HEK293T (cell line): ENCODE measurements at regions of chr12 and their contacts with region 1.

Region 1: DNA sequence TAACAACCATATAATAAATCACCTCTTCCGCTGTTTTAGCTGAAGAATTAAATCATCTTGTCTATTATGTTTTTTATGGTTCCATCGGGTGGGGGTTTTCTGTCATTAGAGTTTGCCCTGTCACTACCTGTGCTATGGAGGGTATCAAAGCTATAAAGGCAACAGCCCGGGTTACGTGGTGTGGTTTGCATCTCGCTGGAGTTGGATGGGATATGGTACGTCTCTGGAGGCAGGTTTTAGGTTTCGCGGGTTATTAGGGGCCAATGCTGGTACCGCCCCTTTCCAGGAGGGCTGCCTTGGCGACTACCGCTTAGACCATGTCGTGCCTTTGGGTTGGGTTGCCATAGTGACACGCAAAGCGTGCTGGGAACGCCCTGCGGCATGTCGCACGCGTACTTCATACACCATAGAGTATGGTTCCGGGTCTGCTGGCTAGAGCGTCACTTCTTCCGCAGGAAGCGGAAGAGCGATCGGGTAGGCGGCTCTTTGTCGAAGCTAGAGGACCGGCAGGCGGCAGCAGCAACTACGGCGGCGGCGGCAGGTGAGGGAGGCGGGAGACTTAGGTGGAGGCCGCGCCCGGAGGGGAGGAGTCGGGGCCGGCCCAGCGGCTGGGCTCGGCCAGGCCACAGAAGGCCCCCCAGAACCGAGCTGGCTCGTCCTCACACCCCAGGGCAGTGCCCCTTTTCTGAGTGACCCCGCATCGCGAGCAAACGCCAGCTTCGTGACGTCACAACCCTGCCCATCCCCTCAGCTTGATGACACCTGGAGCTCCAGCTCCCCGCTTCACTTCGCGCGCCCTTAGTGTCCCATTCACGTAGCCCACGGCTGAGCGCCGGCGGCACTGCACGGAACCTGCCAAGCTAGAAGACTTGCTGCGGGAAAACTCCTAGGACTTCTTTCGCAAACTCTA is at the start of gene ZC3H10:
- DNase-seq: peak; percentile 92

Region 2: GRCh38 chr12:56041552-56042429 is 76.2 kb before region 1 on chr12 and contains the start of gene RPS26:
- CTCF ChIA-PET with region 1: interaction called, 3 read pairs
- POLR2A ChIA-PET with region 1: interaction called, 47 read pairs
- DNase-seq: peak; percentile 89

Region 3: DNA sequence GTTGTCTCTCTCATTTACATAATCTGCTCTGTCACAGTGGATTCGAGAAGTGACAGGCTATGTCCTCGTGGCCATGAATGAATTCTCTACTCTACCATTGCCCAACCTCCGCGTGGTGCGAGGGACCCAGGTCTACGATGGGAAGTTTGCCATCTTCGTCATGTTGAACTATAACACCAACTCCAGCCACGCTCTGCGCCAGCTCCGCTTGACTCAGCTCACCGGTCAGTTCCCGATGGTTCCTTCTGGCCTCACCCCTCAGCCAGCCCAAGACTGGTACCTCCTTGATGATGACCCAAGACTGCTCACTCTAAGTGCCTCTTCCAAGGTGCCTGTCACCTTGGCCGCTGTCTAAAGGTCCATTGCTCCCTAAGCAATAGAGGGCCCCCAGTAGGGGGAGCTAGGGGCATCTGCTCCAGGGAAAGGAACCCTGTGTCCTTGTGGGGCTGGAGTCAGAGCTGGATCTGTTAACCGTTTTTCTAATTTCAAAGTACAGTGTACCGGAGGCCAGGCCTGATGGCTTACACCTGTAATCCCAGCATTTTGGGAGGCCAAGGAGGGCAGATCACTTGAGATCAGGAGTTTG is 33.0 kb before region 1 on chr12:
- CTCF ChIA-PET with region 1: interaction called, 3 read pairs
- POLR2A ChIA-PET with region 1: interaction called, 19 read pairs
- DNase-seq: peak; percentile 68

Region 4: DNA sequence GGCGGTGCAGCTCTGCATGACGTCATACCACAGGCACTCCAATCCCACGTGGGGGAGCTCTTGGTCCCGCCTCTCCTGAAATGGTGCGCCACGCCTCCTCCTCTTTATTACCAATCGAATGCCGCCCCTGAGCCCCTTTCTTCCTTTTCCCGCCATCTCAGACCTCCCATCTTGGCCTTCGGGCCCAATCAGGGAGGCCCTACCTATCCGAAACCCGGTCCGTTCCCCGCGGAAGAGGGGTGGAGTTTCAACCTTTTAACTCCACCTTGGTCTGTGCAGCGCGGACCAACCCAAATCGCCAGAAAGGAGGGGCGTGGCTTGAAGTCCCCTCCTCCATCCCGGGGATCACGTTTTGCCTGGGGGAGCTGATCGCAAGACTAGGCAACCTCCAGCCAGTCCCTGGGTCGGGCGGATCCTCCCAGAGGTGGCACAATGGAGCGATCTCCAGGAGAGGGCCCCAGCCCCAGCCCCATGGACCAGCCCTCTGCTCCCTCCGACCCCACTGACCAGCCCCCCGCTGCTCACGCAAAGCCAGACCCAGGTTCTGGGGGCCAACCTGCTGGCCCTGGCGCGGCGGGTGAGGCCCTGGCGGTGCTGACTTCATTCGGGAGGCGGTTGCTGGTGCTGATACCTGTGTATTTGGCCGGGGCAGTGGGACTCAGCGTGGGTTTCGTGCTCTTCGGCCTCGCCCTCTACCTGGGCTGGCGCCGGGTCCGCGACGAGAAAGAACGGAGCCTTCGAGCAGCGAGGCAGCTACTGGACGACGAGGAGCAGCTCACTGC is 10.0 kb after region 1 on chr12 and contains the start of gene ESYT1:
- CTCF ChIA-PET with region 1: interaction called, 5 read pairs
- POLR2A ChIA-PET with region 1: interaction called, 56 read pairs
- DNase-seq: peak; percentile 95

Region 5: GRCh38 chr12:56158029-56158925 is 40.2 kb after region 1 on chr12 and contains the start of gene MYL6:
- CTCF ChIA-PET with region 1: interaction called, 6 read pairs
- POLR2A ChIA-PET with region 1: interaction called, 19 read pairs
- DNase-seq: peak; percentile 90

Region 6: GRCh38 chr12:56221527-56222387 is 103.7 kb after region 1 on chr12 and contains the start of gene RNF41:
- CTCF ChIA-PET with region 1: interaction called, 10 read pairs
- POLR2A ChIA-PET with region 1: interaction called, 37 read pairs
- DNase-seq: peak; percentile 95

Region 7: GRCh38 chr12:56293795-56294194 is 175.8 kb after region 1 on chr12:
- CTCF ChIA-PET with region 1: no interaction called
- POLR2A ChIA-PET with region 1: no interaction called
- DNase-seq: no peak